Dorsolateral prefrontal cortex (tissue), 120 donors: ENCODE measurements at regions of chr15 and their contacts with region 1.

Region 1: DNA sequence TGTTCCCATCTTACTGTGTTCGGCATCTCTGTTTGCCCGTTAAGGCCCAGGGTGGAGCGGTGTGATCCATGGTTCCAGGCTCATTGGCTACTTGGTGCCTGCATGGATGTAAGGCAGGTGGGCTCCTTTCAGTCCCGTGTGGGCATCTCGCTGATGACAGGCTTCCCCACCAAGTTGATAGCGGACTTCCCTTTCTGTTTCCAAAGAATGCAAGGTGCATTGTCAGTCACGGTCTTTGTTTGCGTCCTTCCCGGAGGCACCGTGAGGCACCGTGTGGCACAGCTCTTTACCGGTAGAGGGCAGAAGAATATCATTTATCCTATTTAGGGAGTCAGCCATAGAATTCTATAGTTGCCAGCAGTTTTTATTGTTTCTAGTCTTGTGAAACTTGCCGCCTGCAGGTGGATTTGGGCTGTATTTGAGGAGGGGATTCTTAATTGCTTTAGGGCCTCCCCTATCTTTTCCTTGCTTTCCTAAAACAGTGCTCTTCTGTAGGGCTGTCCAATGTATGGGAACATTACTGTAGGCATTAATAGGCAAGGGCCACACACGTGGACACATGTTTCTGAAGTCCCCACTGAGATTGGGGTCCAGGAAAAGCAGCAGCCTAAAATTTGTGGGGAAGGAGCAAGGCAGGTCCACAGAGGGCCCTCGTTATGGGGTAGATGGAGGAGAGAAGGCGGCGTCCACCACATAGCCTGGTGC is 244.1 kb downstream of the SLCO3A1 start:
- DNase-seq: peak in 6 of 10 donors; percentile 36 to 60 (median 56)
- H3K4me3 ChIP-seq: peak overlapping the region in 1 of 59 donors; percentile 2
- H3K27ac ChIP-seq: peak overlapping the region in 10 of 59 donors; percentile 5 to 47 (median 26)
- H3K27me3 ChIP-seq: no peaks in the 10 kb centered on the region
- CTCF ChIP-seq: peak; percentile 62 to 94 (median 86)

Region 2: GRCh38 chr15:91694831-91695210 is 402.8 kb before region 1 on chr15:
- intact Hi-C with region 1: no loop called
- DNase-seq: no peak
- H3K4me3 ChIP-seq: peak overlapping the region in 8 of 59 donors; percentile 0 to 34 (median 16)
- H3K27ac ChIP-seq: peak overlapping the region in 53 of 59 donors; percentile 0 to 83 (median 62)
- H3K27me3 ChIP-seq: no peaks in the 10 kb centered on the region
- CTCF ChIP-seq: no peak

Region 3: GRCh38 chr15:92112180-92112579 is 14.6 kb after region 1 on chr15:
- intact Hi-C with region 1: loop called in 1 of 2 experiments (anchors 2 kb)
- DNase-seq: peak in 3 of 10 donors; percentile 27 to 67 (median 65)
- H3K4me3 ChIP-seq: peak overlapping the region in 1 of 59 donors; percentile 20
- H3K27ac ChIP-seq: peak overlapping the region in 37 of 59 donors; percentile 1 to 76 (median 50)
- H3K27me3 ChIP-seq: no peaks in the 10 kb centered on the region
- CTCF ChIP-seq: no peak

Region 4: DNA sequence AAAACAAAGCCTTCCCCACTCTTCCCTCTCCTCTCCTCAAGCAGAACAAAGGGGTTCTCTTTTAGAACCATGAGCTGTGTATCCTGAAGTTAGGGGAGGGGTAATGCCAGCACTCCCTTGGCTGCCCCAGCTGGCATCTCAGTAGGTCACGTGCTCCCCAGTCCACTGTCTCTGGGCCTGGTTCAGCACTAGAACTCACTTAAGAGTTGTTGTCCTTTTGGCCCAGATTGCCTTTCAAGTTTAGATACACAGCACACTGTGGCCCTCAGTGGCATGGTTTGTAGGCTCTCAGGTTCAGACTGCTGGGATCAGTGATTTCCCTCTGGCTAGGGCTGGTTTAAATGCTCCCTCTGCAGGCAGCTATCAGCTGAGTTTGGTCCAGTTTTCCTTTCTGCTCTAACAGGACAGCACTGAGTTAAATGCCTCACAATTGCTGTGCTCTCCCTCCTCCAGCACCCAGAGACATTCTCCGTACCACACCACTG is 107.7 kb after region 1 on chr15:
- intact Hi-C with region 1: loop called in 1 of 2 experiments (anchors 2 kb)
- DNase-seq: peak in 3 of 10 donors; percentile 11 to 34 (median 29)
- H3K4me3 ChIP-seq: no peak overlapping the region
- H3K27ac ChIP-seq: no peak overlapping the region
- H3K27me3 ChIP-seq: no peaks in the 10 kb centered on the region
- CTCF ChIP-seq: peak in 45 of 56 donors; percentile 11 to 62 (median 33)

Region 5: DNA sequence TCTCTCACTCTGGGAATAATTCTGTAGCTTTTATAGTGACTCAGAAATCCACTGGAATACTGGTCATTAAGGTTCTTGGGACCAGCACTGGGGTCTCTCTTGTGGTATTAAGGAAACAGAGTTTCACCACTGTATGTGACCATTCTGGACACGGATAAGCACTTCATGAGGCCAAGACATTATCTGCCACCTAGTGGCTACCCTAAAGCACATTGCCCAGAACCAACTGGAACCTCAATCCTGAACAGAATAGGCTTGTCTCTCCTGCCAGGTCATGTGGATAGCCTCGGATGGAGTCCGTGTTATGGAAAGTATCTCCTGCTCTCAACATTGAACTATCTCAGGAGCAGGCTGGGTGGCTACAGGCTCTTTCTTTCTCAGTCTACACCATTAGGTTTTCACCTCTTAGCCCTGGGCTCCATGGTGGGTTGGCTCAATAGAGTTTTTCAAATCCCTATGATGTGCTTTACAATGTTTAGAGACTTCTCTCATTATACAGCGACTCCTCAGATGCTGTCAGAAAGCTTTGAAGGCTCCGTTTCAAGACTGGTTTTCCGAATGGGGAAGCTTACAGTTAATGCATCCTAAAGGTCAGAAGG is 128.5 kb after region 1 on chr15:
- intact Hi-C with region 1: loop called (anchors 2 kb)
- DNase-seq: peak in 3 of 10 donors; percentile 21 to 38 (median 24)
- H3K4me3 ChIP-seq: no peak overlapping the region
- H3K27ac ChIP-seq: no peak overlapping the region
- H3K27me3 ChIP-seq: peaks cover 0 to 12% (median 0%) of the 10 kb centered on the region in 45 donors
- CTCF ChIP-seq: peak; percentile 11 to 87 (median 66)